ENCODE measurements at regions of chr12 and their contacts with region 1.

Region 1: GRCh38 chr12:53321074-53321814 is at the start of gene AAAS:
- DNase-seq: peak; percentile 98
- ATAC-seq: peak; percentile 87
- H3K4me3 Mint-ChIP-seq: peak within 1 kb of the TSS; percentile 92
- H3K27ac Mint-ChIP-seq: peak within 1 kb of the TSS; percentile 96
- H3K4me1 Mint-ChIP-seq: peaks cover 47% of the 10 kb centered on the region
- H3K27me3 Mint-ChIP-seq: no peaks in the 10 kb centered on the region
- total RNA-seq, gene AAAS: 67.5 to 67.9 TPM

Region 2: DNA sequence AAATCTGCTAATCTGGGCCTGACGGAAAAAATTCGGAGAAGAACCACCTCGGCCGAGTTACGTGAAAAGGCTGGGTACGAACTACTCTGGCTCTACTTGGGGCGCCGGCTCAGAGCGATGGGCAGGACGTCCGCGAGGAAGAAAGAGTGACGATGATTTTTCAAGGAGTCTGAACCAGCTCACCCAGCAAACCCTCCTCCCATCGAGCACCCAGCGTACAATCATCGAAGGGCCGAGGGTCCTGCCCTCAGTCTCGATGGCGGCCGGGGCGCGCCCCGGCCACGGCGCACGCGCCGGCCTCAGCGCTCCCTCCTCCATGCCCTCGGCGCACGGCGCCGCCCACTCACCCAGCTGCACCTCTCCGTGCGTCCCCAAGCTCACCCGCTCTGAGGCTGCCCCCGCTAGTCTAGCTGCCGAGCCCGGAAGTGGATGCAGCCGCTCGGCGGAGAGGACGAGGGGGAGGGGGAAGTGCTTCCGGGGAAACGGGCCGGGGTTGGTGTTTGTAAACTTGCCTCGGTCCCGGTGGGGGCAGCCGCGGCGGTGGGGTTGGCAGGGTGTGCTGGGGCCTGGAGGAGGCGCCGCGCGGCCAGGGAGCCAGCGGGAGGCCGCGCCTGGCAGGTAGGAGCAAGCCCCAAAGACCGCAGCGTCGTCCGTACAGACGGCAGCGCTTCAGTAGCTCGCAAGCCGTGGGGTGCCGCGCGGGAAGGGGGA is 140.9 kb before region 1 on chr12 and contains the starts of genes CSAD and ZNF740:
- CTCF ChIA-PET with region 1: interaction called, 23 read pairs
- POLR2A ChIA-PET with region 1: interaction called, 6 read pairs
- DNase-seq: peak; percentile 98
- ATAC-seq: peak; percentile 97
- H3K4me3 Mint-ChIP-seq: peak within 1 kb of the TSS; percentile 86
- H3K27ac Mint-ChIP-seq: peak within 1 kb of the TSS; percentile 98
- H3K4me1 Mint-ChIP-seq: peaks cover 50% of the 10 kb centered on the region
- H3K27me3 Mint-ChIP-seq: no peaks in the 10 kb centered on the region
- total RNA-seq, gene CSAD: 15.7 to 17.0 TPM
- total RNA-seq, gene ZNF740: 28.2 to 31.4 TPM

Region 3: DNA sequence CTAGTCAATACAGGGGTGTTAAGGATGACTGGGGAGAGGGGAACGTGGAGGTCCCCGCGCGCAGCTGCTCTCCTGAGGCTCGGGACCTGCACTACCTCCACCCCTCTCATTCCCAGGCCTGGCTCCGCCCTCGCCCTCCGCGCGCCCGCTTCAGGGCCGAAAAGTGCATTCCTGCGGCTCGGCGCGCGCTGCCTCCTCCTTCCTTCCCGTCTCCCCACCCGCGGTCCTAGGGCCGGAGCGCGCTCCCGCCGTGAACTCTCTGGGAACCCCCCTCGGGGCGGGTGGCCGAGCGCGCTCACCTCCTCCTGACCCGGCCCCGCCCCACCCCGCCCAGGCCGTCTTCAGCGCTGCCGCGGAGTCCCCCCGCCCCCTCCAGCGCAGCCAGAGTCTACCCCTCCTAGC is 100.4 kb before region 1 on chr12:
- CTCF ChIA-PET with region 1: interaction called, 88 read pairs
- POLR2A ChIA-PET with region 1: interaction called, 7 read pairs
- DNase-seq: peak; percentile 91
- ATAC-seq: peak; percentile 68
- H3K4me3 Mint-ChIP-seq: peak overlapping the region; percentile 97
- H3K27ac Mint-ChIP-seq: peak overlapping the region; percentile 90
- H3K4me1 Mint-ChIP-seq: peaks cover 78% of the 10 kb centered on the region
- H3K27me3 Mint-ChIP-seq: no peaks in the 10 kb centered on the region

Region 4: GRCh38 chr12:53295070-53295890 is 26.0 kb before region 1 on chr12 and contains the start of gene PFDN5:
- CTCF ChIA-PET with region 1: interaction called, 204 read pairs
- POLR2A ChIA-PET with region 1: interaction called, 24 read pairs
- DNase-seq: peak; percentile 93
- ATAC-seq: peak; percentile 88
- H3K4me3 Mint-ChIP-seq: peak within 1 kb of the TSS; percentile 97
- H3K27ac Mint-ChIP-seq: peak within 1 kb of the TSS; percentile 92
- H3K4me1 Mint-ChIP-seq: peaks cover 40% of the 10 kb centered on the region
- H3K27me3 Mint-ChIP-seq: no peaks in the 10 kb centered on the region
- total RNA-seq, gene PFDN5: 292 to 307 TPM

Region 5: DNA sequence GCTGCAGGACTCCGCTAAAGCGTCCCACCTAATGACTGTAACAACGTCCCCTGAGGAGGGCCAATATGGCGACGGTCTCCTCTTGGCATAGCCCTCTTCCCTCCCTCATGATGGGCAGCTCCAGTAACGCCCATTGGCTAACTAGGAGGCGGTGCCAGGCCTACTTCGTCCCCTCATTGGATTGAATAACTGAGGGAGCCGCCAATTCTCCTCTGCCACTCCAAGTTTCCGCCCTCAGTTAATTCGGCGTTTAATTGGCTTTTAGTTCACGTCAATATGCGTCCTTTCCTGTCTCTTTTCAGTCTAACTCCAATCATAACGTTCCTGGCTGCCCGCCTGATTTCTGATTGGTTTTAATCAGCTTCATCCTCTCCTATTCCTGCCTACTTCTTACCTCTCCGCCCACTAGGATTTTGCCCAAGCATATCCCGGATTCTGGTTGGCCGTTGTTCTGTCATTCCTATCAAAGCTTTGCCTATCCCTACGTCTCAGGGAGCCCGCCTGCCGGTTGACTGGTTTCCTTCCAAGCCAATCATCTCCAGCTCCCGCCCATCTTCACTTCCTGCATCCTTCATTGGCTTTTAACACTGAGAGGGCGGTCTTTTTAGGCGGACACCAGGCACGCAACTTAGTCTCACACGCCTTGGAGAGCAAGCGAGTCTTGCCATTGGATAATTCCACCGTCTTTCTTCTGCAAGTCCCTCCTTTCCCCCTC is 58.3 kb after region 1 on chr12:
- CTCF ChIA-PET with region 1: interaction called, 69 read pairs
- POLR2A ChIA-PET with region 1: interaction called, 7 read pairs
- DNase-seq: peak; percentile 99
- ATAC-seq: peak; percentile 80
- H3K4me3 Mint-ChIP-seq: no peak overlapping the region
- H3K27ac Mint-ChIP-seq: no peak overlapping the region
- H3K4me1 Mint-ChIP-seq: peaks cover 35% of the 10 kb centered on the region
- H3K27me3 Mint-ChIP-seq: no peaks in the 10 kb centered on the region